Thyroid gland (tissue), 4 donors: ENCODE measurements at regions of chr19 and their contacts with region 1.

Region 1: DNA sequence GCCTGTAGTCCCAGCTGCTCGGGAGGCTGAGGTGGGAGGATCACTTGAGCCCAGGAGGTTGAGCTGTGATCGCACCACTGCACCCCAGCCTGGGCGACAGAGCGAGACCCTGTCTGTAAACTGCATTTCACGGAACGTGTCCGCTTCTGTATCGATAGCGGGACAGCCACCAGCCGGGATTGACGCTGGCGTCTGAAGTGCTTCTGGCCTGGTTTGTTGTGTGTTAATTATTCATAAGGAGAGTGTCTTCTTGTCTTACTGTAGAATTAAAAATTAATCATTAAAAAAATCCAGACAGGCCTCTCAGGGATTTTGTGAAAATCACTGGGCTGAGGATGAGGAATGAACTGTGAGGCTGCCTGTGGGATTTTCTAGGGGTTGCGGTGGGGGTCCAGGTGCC is 16.2 kb upstream of the MISP start:
- DNase-seq: no peak
- H3K4me3 ChIP-seq: no peak overlapping the region
- H3K27ac ChIP-seq: no peak overlapping the region
- H3K4me1 ChIP-seq: no peaks in the 10 kb centered on the region
- H3K27me3 ChIP-seq: no peaks in the 10 kb centered on the region
- CTCF ChIP-seq: no peak
- POLR2A ChIP-seq: no peak

Region 2: DNA sequence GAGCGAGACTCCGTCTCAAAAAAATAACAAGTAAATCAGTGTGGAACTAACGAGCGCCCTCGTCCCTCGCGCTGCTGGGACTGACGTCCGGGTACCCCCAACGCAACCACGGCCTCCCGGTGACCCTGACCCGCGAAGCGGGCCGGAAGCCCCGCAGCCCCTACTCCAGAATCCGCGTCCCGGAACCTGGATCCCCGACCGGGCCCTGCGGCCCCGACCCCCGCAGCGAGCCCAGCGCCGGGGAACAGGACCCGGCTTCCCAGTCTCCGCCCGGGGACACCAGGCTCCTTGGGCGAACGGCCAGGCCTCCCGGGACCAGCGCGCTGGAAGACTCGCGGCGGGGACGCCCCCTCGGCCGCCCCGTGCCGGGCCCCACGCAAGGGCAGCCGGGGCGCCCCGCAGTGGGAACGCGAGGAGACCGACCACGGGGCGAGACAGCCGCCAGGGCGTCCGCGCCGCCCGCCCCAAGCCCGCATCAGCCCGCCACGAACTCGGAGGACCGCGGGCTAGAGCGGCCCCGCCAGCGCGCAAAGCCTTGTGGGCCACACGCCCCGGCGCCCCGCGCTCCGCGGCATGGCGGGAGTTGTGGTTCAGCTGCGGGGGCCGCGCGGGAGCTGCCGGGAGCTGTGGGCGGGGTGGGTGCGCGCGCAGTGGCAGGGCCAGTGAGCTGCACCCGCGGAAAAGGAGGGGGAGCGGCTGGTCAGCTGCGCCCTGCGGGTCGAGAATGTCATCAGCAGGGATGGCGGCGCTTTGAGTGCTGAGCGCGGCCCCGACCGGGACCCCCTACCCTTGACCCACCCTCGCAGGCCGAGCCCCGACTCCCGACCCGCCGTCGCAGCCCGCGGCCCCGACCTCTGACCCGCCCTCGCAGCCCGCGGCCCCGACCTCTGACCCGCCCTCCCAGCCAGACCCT is 246.0 kb before region 1 on chr19:
- intact Hi-C with region 1: no loop called
- DNase-seq: peak; percentile 95 to 97
- H3K4me3 ChIP-seq: peak overlapping the region; percentile 53 to 97 (median 59)
- H3K27ac ChIP-seq: peak overlapping the region; percentile 73 to 95 (median 76)
- H3K4me1 ChIP-seq: peaks cover 6 to 7% of the 10 kb centered on the region in 2 donors
- H3K27me3 ChIP-seq: no peaks in the 10 kb centered on the region
- CTCF ChIP-seq: peak in 1 of 6 experiments; percentile 24
- POLR2A ChIP-seq: peak in 1 of 2 donors; percentile 87

Region 3: DNA sequence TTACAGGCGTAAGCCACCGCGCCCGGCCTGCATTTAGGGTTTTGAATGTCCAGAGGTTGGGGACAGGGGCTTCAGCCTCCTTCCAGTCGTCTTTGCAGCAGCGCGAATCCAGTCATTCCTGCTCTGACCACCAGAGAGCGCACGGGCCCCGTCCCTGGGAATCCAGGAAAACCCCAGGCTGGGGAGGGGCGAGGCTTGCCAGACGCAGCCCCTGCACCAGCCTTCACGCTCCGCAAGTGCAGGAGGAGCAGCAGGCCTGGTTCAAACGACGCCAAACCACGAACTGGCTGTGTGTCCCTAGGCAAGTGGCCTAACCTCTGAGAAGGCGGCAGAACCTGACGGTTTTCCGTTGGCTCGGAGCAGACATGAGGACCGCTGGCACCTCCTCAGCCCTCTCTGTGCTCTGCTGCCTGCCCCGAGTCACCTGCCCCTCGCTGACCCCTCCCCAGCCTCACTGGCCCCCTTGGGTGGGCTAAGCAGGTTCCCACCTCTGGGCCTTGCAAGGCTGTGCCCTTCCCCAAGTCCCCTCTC is 69.7 kb before region 1 on chr19:
- intact Hi-C with region 1: loop called (anchors 2 kb)
- DNase-seq: peak; percentile 77 to 78
- H3K4me3 ChIP-seq: no peak overlapping the region
- H3K27ac ChIP-seq: no peak overlapping the region
- H3K4me1 ChIP-seq: peaks cover 27 to 39% of the 10 kb centered on the region in 2 donors
- H3K27me3 ChIP-seq: no peaks in the 10 kb centered on the region
- CTCF ChIP-seq: peak; percentile 93 to 97 (median 94)
- POLR2A ChIP-seq: no peak

Region 4: GRCh38 chr19:771332-771785 is 36.6 kb after region 1 on chr19:
- intact Hi-C with region 1: no loop called
- DNase-seq: peak in 1 of 2 donors; percentile 39
- H3K4me3 ChIP-seq: no peak overlapping the region
- H3K27ac ChIP-seq: no peak overlapping the region
- H3K4me1 ChIP-seq: peaks cover 9 to 21% of the 10 kb centered on the region in 2 donors
- H3K27me3 ChIP-seq: no peaks in the 10 kb centered on the region
- CTCF ChIP-seq: peak in 1 of 6 experiments; percentile 51
- POLR2A ChIP-seq: no peak

Region 5: DNA sequence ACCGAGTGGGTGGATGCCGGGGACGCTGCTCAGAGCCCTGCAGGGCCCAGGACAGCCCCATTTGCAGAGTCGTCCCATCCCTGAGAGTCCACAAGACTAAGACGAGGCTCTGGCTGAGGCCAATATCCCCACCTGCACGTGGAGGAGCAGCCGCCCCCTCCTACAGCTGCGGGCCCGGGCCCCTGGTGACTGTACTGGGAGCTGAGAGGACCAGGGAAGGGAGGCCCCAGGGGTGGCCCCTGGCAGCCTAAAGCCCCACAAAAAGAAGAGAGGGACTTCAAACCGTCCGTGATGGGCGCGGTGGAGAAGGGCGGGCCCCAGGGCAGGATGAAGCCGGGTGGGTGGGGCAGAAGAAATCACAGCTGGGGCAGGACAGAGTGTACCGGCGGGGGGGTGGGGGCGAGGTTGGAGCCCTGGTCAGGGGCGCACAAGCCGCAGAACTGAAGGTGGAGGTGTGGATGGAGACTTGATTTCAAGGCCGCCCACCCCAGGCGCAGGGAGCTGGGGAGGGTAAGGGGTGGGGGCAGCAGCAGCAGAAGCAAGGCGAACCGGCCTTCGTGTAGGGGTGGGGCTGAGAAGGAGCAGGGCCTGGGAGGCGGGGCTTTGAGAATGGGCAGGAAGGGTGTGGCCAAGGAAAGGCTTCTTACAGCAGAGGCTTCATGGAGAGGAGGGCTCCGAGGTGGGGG is 137.7 kb after region 1 on chr19:
- intact Hi-C with region 1: no loop called
- DNase-seq: no peak
- H3K4me3 ChIP-seq: no peak overlapping the region
- H3K27ac ChIP-seq: no peak overlapping the region
- H3K4me1 ChIP-seq: peaks cover 0 to 4% of the 10 kb centered on the region in 2 donors
- H3K27me3 ChIP-seq: no peaks in the 10 kb centered on the region
- CTCF ChIP-seq: no peak
- POLR2A ChIP-seq: no peak